ENCODE measurements at regions of chr15 and their contacts with region 1.

Region 1: DNA sequence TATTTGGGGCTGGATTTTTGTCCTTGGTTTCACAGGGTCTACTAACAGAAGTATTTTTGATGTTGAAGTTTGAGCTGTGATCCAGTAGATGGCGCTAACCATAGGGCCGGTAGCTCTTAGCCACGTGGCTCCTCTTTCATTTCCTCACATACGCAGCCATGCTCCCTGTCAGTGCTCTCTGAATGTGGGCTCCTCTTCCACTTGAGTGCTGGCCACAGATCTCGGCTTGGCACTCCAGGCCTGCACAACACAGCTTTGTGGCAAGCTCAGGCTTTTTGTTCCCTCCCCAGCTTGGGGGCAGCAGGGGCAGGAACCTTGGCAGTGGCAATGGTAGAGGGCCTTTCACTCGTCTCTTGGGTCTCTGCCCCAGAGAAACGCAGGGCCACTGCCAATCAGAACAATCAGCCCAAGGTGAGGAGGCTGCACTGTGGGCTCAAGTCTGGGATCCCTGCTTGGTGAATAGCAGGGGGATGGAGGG is 18.6 kb upstream of the DNAAF4 start:
- DNase-seq: no peak
- H3K4me3 ChIP-seq: no peak overlapping the region
- H3K27me3 ChIP-seq: no peaks in the 10 kb centered on the region
- CTCF ChIP-seq: peak; percentile 71

Region 2: GRCh38 chr15:55514414-55514850 is 12.2 kb before region 1 on chr15:
- CTCF ChIA-PET with region 1: interaction called, 42 read pairs
- POLR2A ChIA-PET with region 1: interaction called, 6 read pairs
- DNase-seq: no peak
- H3K4me3 ChIP-seq: no peak overlapping the region
- H3K27me3 ChIP-seq: no peaks in the 10 kb centered on the region
- CTCF ChIP-seq: no peak

Region 3: GRCh38 chr15:55637086-55637485 is 110.5 kb after region 1 on chr15:
- CTCF ChIA-PET with region 1: interaction called, 31 read pairs
- POLR2A ChIA-PET with region 1: no interaction called
- DNase-seq: no peak
- H3K4me3 ChIP-seq: no peak overlapping the region
- H3K27me3 ChIP-seq: no peaks in the 10 kb centered on the region
- CTCF ChIP-seq: no peak

Region 4: DNA sequence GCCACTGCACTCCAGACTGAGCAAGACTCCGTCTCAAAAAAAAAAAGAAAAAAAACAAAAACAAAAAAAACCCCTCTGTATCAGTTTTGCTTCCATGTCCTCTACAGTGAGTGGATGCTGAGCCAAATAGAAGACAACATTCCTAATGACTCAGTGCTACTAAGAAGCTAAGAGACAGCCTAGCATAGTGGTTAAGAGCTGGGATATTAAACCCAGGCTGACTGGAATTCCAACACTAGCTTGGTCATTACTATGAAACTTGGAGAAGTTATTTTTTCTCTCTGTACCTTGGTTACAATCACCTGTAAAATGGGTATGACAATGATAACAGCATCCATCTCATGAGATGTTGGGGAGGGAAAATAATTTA is 122.4 kb after region 1 on chr15:
- CTCF ChIA-PET with region 1: interaction called, 31 read pairs
- POLR2A ChIA-PET with region 1: no interaction called
- DNase-seq: peak; percentile 25
- H3K4me3 ChIP-seq: no peak overlapping the region
- H3K27me3 ChIP-seq: no peaks in the 10 kb centered on the region
- CTCF ChIP-seq: no peak